Activated CD4-positive, alpha-beta T cell treated with anti-CD3 and anti-CD28 coated beads for 36 hours (primary cell): ENCODE measurements at regions of chr17 and their contacts with region 1.

Region 1: DNA sequence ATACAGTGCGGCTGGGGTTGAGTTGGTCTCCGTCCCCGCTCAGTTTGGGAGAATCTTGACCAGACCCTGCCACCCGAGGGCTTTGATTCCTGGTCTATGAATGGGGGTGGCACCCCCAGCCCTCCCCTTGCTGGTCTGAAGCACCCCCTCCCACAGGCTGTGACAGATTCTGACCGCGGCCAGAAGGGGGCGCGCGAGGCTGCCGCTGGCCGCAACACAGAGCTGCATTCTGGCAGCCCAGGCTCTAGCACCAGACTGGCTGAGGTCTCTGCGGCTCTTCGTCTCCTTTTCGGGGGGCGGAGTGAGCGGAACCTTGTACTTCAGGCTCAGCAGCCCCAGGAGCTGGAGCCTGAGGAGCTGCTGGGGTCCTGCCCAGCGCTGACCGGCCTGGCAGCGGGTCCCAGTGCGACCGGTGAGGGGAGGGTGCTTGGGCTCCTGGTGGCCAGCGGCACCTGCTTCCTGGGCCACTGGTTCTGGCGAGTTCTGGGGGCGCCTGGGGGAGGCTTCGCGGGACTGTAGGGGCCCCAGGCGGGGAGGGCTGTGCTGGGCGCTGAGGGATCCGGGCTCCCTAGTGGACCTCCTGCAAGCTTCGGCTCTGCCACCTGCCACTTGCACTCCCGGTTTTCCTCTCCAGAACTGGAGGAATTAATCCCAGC is 1011.6 kb downstream of the KCNJ18 start:
- DNase-seq: no peak
- ATAC-seq: no peak
- H3K4me3 Mint-ChIP-seq: no peak overlapping the region
- H3K27ac Mint-ChIP-seq: no peak overlapping the region
- H3K4me1 Mint-ChIP-seq: no peaks in the 10 kb centered on the region
- H3K27me3 Mint-ChIP-seq: no peaks in the 10 kb centered on the region

Region 2: DNA sequence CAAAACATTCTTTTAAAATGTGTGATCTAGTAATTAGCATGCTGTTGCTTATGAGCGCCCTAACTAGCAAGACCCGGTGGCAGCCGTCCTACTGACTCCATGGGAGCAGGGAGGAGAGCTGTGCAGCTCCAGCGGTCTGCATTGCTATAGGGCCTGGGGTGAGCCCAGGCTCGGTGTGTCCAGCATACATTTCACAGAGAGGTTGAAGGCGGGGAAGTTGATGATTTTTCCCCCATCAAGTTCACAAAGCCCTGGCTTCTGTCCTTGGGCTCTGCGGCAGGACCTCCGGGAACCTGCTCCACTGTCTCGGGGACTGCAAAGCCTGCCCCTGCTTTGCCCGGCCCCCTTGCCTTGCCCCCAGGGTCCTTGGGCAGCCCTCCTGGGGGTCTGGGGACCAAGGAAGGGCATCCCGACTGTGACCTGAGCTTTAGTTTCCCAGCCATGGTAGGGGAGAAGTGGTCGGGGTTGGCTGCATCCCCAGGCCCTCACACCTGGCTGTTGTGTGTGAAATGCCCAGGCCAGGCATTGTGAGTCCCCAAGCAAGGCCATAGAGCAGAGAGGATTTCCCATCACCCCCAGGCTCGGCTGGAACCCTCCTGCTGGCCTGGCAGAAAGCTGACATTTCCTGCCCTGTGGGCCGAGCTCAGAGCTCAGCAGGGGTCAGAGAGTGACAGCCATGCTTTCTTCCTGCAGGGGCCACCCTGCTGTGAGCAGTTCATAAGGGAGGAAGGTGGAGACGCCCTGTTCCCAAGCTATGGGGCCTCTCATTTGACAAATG is 1302.9 kb before region 1 on chr17:
- CTCF ChIA-PET with region 1: no interaction called
- POLR2A ChIA-PET with region 1: no interaction called
- intact Hi-C with region 1: no loop called
- DNase-seq: no peak
- ATAC-seq: no peak
- H3K4me3 Mint-ChIP-seq: no peak overlapping the region
- H3K27ac Mint-ChIP-seq: no peak overlapping the region
- H3K4me1 Mint-ChIP-seq: no peaks in the 10 kb centered on the region
- H3K27me3 Mint-ChIP-seq: no peaks in the 10 kb centered on the region

Region 3: GRCh38 chr17:22374741-22375140 is 329.2 kb before region 1 on chr17:
- CTCF ChIA-PET with region 1: no interaction called
- POLR2A ChIA-PET with region 1: no interaction called
- intact Hi-C with region 1: loop called in 1 of 2 experiments (anchors 10 kb)
- DNase-seq: no peak
- ATAC-seq: no peak
- H3K4me3 Mint-ChIP-seq: no peak overlapping the region
- H3K27ac Mint-ChIP-seq: no peak overlapping the region
- H3K4me1 Mint-ChIP-seq: no peaks in the 10 kb centered on the region
- H3K27me3 Mint-ChIP-seq: no peaks in the 10 kb centered on the region

Region 4: DNA sequence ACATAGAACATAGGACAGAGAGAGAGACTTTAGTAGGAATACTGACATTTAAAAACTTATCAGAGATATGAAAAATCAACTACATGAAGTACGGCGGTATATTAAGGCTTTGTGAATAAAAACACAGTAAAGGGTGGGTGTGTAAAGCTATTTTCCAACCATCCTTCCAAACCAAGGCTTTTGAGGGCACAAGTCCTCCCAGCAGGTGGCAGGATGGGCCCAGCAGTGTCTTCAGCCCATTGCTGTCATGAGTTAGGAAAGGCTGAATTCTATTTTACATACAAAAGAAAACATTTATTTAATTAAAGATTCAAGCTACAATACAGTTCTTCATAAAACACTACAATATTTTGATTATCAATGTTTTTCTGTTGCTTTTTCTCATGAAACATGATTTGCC is 170.2 kb before region 1 on chr17:
- CTCF ChIA-PET with region 1: no interaction called
- POLR2A ChIA-PET with region 1: no interaction called
- intact Hi-C with region 1: loop called in 1 of 2 experiments (anchors 5 kb)
- DNase-seq: no peak
- ATAC-seq: no peak
- H3K4me3 Mint-ChIP-seq: no peak overlapping the region
- H3K27ac Mint-ChIP-seq: no peak overlapping the region
- H3K4me1 Mint-ChIP-seq: no peaks in the 10 kb centered on the region
- H3K27me3 Mint-ChIP-seq: no peaks in the 10 kb centered on the region

Region 5: DNA sequence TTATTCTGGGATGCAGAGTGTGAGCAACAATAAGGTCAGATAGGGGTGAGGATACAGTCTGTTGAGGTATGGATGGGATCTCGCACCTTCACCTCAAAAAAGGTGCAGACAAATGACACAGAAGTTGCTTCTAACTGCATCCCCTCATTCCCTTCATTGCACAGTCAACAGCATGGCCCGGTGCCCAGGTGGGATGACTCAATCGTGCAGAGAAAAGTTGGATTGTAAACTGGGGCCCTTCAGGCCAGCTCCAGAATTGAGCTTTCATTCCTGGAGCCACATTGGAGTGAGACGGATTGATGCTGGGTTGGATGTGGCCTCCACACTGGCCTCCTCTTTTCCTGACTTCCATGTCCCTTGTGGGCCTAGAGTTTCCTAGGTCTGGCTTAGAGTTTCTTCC is 34.2 kb before region 1 on chr17:
- CTCF ChIA-PET with region 1: no interaction called
- POLR2A ChIA-PET with region 1: no interaction called
- intact Hi-C with region 1: no loop called
- DNase-seq: no peak
- ATAC-seq: no peak
- H3K4me3 Mint-ChIP-seq: no peak overlapping the region
- H3K27ac Mint-ChIP-seq: no peak overlapping the region
- H3K4me1 Mint-ChIP-seq: no peaks in the 10 kb centered on the region
- H3K27me3 Mint-ChIP-seq: no peaks in the 10 kb centered on the region